ENCODE measurements at regions of chr18 and their contacts with region 1.

Region 1: DNA sequence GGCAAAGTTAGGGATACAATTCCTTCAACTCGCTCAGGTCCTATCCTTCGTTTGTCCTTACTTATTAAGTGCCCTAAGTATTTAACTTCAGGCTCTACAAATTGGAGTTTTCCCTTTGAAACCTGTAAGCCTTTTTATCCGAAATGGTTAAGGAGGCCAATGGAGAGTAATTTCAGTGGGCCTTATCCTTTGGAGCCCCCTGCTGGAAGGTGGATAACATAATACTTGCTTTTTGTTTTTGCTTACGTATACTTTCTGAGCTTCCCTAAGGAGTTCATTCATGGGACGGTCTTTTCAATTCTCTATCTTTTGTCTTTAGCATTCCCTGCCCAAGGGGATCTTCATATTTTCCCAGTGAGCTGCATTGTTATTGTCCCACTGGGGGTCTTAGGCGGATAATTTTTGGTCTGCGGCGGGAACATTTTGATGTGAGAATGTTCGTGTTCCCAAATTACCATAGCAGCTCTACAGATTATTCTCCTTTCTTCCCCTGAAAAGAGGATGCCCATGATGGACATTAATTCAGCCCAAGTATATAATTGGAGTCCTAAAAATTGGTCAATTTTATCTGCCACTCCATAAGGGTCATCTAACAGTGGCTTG is 34.4 kb upstream of the TRAPPC8 start:
- DNase-seq: peak; percentile 56
- ATAC-seq: peak; percentile 92
- H3K4me3 Mint-ChIP-seq: no peak overlapping the region
- H3K27ac Mint-ChIP-seq: no peak overlapping the region
- H3K4me1 Mint-ChIP-seq: peaks cover 16% of the 10 kb centered on the region
- H3K27me3 Mint-ChIP-seq: no peaks in the 10 kb centered on the region; the same call in 1 of the 2 replicates
- CTCF ChIP-seq: peak; percentile 51

Region 2: GRCh38 chr18:31555971-31556747 is 421.2 kb before region 1 on chr18:
- CTCF ChIA-PET with region 1: interaction called, 28 read pairs
- POLR2A ChIA-PET with region 1: interaction called, 3 read pairs
- DNase-seq: peak; percentile 24
- ATAC-seq: peak; percentile 40; the same call in 1 of the 2 replicates
- H3K4me3 Mint-ChIP-seq: no peak overlapping the region
- H3K27ac Mint-ChIP-seq: no peak overlapping the region
- H3K4me1 Mint-ChIP-seq: peaks cover 36% of the 10 kb centered on the region
- H3K27me3 Mint-ChIP-seq: no peaks in the 10 kb centered on the region
- CTCF ChIP-seq: peak; percentile 69

Region 3: GRCh38 chr18:31610286-31611205 is 366.8 kb before region 1 on chr18:
- CTCF ChIA-PET with region 1: interaction called, 11 read pairs
- POLR2A ChIA-PET with region 1: no interaction called
- DNase-seq: peak; percentile 63
- ATAC-seq: peak; percentile 98
- H3K4me3 Mint-ChIP-seq: no peak overlapping the region
- H3K27ac Mint-ChIP-seq: no peak overlapping the region
- H3K4me1 Mint-ChIP-seq: peaks cover 31% of the 10 kb centered on the region
- H3K27me3 Mint-ChIP-seq: no peaks in the 10 kb centered on the region
- CTCF ChIP-seq: peak; percentile 46; the same call in 1 of the 2 replicates

Region 4: GRCh38 chr18:31942999-31943865 is 34.1 kb before region 1 on chr18 and contains the start of gene TRAPPC8:
- CTCF ChIA-PET with region 1: interaction called, 34 read pairs
- POLR2A ChIA-PET with region 1: interaction called, 6 read pairs
- DNase-seq: peak; percentile 96
- ATAC-seq: peak; percentile 83
- H3K4me3 Mint-ChIP-seq: peak within 1 kb of the TSS; percentile 100
- H3K27ac Mint-ChIP-seq: peak within 1 kb of the TSS; percentile 100
- H3K4me1 Mint-ChIP-seq: peaks cover 52% of the 10 kb centered on the region
- H3K27me3 Mint-ChIP-seq: no peaks in the 10 kb centered on the region
- CTCF ChIP-seq: no peak
- total RNA-seq, gene TRAPPC8: 45.4 to 56.3 TPM (median 53.2 TPM) in 3 replicates

Region 5: GRCh38 chr18:31990823-31991222 is 13.5 kb after region 1 on chr18:
- CTCF ChIA-PET with region 1: interaction called, 12 read pairs
- POLR2A ChIA-PET with region 1: no interaction called
- DNase-seq: no peak
- ATAC-seq: no peak
- H3K4me3 Mint-ChIP-seq: no peak overlapping the region
- H3K27ac Mint-ChIP-seq: no peak overlapping the region
- H3K4me1 Mint-ChIP-seq: peaks cover 9% of the 10 kb centered on the region
- H3K27me3 Mint-ChIP-seq: no peaks in the 10 kb centered on the region
- CTCF ChIP-seq: no peak

Region 6: DNA sequence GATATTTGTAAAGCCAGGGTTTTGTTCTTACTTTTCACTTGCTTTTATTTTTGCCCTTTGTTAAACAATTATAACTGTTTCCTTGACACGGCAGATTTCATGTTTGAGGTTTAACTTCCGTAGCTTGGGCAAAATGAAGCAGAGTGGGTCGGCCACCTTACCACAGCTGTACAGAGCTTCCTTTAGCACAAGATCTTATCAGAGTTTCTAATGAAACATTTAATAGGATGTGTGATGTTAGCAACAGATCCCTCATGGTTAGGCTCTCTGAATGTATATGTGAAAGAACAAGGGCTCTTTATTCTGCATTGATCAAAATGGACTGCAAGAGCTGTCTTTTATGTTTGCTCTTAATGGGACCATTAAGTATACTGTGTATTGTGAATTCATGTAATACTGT is 63.6 kb after region 1 on chr18:
- CTCF ChIA-PET with region 1: no interaction called
- POLR2A ChIA-PET with region 1: no interaction called
- DNase-seq: no peak
- ATAC-seq: no peak
- H3K4me3 Mint-ChIP-seq: no peak overlapping the region
- H3K27ac Mint-ChIP-seq: no peak overlapping the region
- H3K4me1 Mint-ChIP-seq: no peaks in the 10 kb centered on the region
- H3K27me3 Mint-ChIP-seq: no peaks in the 10 kb centered on the region
- CTCF ChIP-seq: no peak